ENCODE measurements at regions of chr1 and their contacts with region 1.

Region 1: GRCh38 chr1:9867408-9868243 is 42.4 kb downstream of the CTNNBIP1 start:
- DNase-seq: peak; percentile 84 to 85
- H3K4me3 ChIP-seq: no peak overlapping the region
- H3K27ac ChIP-seq: no peak overlapping the region
- H3K4me1 ChIP-seq: peaks cover 0 to 3% of the 10 kb centered on the region in 2 donors
- H3K27me3 ChIP-seq: no peaks in the 10 kb centered on the region
- CTCF ChIP-seq: peak; percentile 95 to 98 (median 96)
- POLR2A ChIP-seq: peak in 1 of 2 donors; percentile 14

Region 2: GRCh38 chr1:9629445-9630201 is 238.0 kb before region 1 on chr1:
- intact Hi-C with region 1: loop called (anchors 10 kb)
- DNase-seq: peak in 1 of 2 donors; percentile 36
- H3K4me3 ChIP-seq: no peak overlapping the region
- H3K27ac ChIP-seq: no peak overlapping the region
- H3K4me1 ChIP-seq: no peaks in the 10 kb centered on the region
- H3K27me3 ChIP-seq: no peaks in the 10 kb centered on the region
- CTCF ChIP-seq: no peak
- POLR2A ChIP-seq: no peak

Region 3: GRCh38 chr1:9700340-9700739 is 167.3 kb before region 1 on chr1:
- intact Hi-C with region 1: no loop called
- DNase-seq: no peak
- H3K4me3 ChIP-seq: no peak overlapping the region
- H3K27ac ChIP-seq: no peak overlapping the region
- H3K4me1 ChIP-seq: no peaks in the 10 kb centered on the region
- H3K27me3 ChIP-seq: no peaks in the 10 kb centered on the region
- CTCF ChIP-seq: no peak
- POLR2A ChIP-seq: no peak

Region 4: DNA sequence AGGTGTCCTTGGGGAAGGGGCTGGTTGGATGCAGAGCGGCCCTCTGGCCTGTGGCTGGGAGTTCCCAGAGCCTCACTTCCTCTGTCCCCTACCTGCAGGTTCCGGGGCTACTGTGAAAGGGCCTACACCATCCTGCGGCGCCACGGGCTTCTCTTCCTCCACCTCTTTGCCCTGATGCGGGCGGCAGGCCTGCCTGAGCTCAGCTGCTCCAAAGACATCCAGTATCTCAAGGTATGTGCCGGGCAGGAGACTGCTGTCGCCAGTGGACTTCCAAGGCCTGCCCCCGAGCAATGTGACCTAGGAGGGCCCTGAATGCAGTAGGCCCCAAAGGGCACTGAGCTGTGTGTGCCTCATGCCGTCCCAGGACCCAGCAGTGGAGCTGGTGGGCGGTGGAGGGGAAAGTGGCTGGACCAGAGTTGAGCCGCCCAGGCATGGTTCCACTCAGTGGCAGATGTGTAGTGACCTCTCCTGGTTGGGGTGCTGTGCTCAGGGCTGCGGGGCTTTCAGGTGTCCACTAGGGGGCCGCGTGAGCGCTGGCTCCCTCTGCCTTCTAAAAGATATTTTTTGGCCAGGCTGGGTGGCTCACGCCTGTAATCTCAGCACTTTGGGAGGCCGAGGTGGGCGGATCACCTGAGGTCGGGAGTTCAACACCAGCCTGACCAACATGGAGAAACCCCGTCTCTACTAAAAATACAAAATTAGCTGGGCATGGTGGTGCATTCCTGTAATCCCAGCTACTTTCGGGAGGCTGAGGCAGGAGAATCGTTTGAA is 142.7 kb before region 1 on chr1:
- intact Hi-C with region 1: loop called (anchors 5 kb)
- DNase-seq: no peak
- H3K4me3 ChIP-seq: no peak overlapping the region
- H3K27ac ChIP-seq: no peak overlapping the region
- H3K4me1 ChIP-seq: no peaks in the 10 kb centered on the region
- H3K27me3 ChIP-seq: no peaks in the 10 kb centered on the region
- CTCF ChIP-seq: peak; percentile 45 to 69 (median 64)
- POLR2A ChIP-seq: no peak

Region 5: DNA sequence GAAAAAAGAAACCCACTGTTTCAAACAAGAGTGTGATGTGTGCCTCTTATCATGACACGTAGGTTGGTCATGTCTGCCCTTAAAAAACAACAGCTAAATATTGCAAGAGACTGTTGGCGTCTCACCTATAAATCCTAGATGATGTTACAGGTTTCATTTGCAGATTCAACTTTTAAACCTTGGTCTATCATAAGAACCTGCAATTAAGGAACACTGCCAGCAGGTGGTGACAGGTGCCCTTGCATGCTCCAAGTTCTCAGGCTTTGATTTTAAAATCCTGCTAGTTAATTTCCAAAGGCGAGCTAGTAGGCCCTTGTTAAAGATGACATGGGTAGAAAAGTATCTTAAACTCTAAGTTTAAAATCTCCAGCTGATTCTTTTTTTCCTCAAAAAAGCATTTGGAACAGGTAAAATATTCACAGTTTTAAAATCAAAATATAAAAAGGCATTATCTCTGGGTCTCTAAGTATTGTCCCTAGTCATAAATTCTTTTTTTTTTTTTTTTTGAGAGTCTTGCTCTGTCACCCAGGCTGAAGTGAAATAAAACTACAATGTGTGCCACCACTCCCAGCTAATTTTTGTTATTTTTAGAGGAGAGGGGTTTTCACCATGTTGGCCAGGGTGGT is 83.0 kb before region 1 on chr1:
- intact Hi-C with region 1: loop called (anchors 5 kb)
- DNase-seq: peak in 1 of 2 donors; percentile 67
- H3K4me3 ChIP-seq: no peak overlapping the region
- H3K27ac ChIP-seq: no peak overlapping the region
- H3K4me1 ChIP-seq: no peaks in the 10 kb centered on the region
- H3K27me3 ChIP-seq: no peaks in the 10 kb centered on the region
- CTCF ChIP-seq: peak; percentile 57 to 80 (median 70)
- POLR2A ChIP-seq: no peak